ENCODE measurements at regions of chr6 and their contacts with region 1.

Region 1: DNA sequence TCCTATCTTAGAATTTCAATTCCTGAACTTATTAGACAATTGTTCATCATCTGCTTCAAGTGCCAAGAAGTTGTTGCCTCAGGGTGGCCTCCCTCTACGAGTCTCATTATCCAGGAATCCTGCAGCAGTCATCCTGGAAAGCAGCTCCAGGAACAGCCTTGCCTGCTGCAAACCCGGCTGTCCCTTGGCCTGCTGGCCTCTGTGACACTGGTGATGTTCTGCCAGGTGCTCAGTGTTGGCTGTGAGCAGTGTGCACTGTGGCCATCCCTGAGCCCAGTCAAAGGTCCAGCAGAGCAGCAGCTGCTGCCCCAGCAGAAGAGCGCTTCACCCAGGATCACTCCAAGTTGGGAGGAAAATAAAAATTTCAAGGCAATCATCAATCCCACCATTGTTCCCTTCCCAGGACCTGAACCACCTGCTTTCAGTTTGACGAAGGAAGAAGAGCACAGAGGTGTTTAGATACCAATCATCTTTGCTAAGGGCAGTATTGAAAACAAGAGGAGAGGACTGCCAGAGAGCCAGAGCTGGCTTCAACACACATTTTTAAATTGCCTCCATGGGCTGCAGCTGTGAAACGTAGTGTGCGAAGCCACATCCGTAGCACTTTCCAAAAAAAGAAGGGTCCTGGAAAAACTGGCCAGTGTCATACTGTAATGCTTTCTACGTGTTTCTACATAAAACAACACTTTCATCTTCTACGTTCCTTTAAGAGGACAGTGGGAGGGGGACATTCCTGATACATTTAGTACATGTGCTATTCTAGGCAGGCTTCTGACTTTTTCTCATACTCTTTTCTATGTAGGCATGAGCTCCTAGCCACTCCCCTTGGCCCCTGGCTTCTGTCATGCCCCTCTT is 7.2 kb upstream of the FAM50B start:
- DNase-seq: peak; percentile 65
- H3K4me3 ChIP-seq: no peak overlapping the region
- H3K27ac ChIP-seq: no peak overlapping the region
- H3K4me1 ChIP-seq: peaks cover 34% of the 10 kb centered on the region
- H3K27me3 ChIP-seq: no peaks in the 10 kb centered on the region
- CTCF ChIP-seq: no peak

Region 2: GRCh38 chr6:3794092-3794491 is 47.8 kb before region 1 on chr6:
- CTCF ChIA-PET with region 1: no interaction called
- dilution Hi-C with region 1: loop called (anchors 5 kb)
- in situ Hi-C with region 1: no loop called
- intact Hi-C with region 1: no loop called
- DNase-seq: no peak
- H3K4me3 ChIP-seq: no peak overlapping the region
- H3K27ac ChIP-seq: no peak overlapping the region
- H3K4me1 ChIP-seq: peaks cover 42% of the 10 kb centered on the region
- H3K27me3 ChIP-seq: no peaks in the 10 kb centered on the region
- CTCF ChIP-seq: no peak

Region 3: DNA sequence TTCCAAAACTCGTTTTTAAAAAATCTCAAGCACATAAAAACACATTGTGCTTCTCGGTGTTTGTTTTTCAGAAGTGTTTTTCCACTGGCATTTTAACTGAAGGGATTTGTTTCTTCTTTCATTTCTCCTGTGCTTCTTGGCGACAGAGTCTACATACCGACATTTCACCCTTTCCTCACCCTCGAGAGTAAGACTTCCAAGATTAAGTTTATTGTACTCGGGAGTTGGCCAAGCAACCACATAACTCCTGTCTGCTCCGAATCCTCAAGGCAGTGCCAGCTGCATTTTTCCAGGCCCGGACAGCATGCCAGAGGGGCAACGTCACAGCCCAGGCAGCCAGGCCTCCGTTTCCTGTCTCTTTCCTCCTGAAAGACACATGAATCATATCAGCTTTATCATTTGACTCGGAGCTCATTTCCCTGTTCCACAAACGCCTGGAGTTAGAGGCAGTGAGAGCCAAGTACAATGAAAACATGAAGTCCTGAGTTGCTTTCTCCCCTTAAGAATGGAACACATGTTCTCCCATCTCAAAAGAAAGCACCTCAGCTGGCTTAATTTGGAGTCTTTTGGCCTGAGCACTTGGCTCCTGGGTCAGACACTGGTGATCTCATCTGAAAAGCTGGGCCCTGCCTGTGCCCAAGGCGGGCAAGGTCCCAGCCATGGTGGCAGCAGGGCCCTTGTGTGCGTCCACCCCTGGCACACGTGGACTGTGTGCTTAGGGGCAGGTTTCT is 15.9 kb before region 1 on chr6:
- CTCF ChIA-PET with region 1: no interaction called
- dilution Hi-C with region 1: no loop called
- in situ Hi-C with region 1: no loop called
- intact Hi-C with region 1: loop called (anchors 1 kb)
- DNase-seq: peak; percentile 95
- H3K4me3 ChIP-seq: peak overlapping the region in 1 of 3 experiments; percentile 11
- H3K27ac ChIP-seq: peak overlapping the region; percentile 91
- H3K4me1 ChIP-seq: peaks cover 61% of the 10 kb centered on the region
- H3K27me3 ChIP-seq: no peaks in the 10 kb centered on the region
- CTCF ChIP-seq: no peak

Region 4: GRCh38 chr6:3882866-3883265 is 40.9 kb after region 1 on chr6:
- CTCF ChIA-PET with region 1: no interaction called
- dilution Hi-C with region 1: no loop called
- in situ Hi-C with region 1: no loop called
- intact Hi-C with region 1: no loop called
- DNase-seq: no peak
- H3K4me3 ChIP-seq: no peak overlapping the region
- H3K27ac ChIP-seq: no peak overlapping the region
- H3K4me1 ChIP-seq: peaks cover 11% of the 10 kb centered on the region
- H3K27me3 ChIP-seq: no peaks in the 10 kb centered on the region
- CTCF ChIP-seq: no peak